Activated naive CD4-positive, alpha-beta T cell treated with anti-CD3 and anti-CD28 coated beads for 36 hours (primary cell): ENCODE measurements at regions of chr6 and their contacts with region 1.

Region 1: DNA sequence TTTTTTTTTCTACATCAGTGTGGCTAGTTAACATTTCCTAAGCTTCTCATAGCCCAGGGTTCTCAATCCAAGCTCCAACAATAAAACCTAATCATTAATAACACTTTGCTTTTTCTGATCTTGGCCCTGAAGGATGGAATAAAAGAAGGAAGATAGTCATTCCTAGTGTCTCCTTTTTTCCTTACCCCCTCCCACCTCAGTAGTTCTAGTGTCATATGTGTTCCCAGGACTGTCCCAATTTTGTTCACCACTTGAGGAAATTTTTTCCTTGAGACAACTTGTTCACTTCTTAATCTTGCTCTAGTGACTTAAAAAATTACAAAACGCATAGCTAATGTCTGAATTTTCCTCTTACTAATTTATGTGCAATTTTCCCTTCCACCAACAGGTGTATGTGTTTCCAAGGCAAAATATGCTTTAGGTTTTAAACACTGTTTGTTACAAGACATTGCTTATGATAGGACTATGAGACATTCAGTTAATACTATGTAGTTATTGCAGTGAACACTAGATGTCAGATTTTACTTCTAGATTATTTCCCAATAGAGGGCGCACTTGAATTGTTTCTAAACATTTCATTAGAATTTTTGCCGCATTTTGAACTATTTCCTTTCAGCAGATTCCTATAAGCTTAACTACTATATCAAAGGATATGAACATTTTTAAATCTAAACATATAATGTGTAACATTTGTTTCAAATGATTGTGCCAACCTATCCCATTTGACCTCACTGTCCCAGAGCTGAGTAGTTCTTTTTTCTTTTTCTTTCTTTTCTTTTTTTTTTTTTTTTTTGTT is 18.5 kb upstream of the C6orf141 start:
- DNase-seq: no peak
- H3K4me3 Mint-ChIP-seq: no peak overlapping the region
- H3K27ac Mint-ChIP-seq: no peak overlapping the region
- H3K4me1 Mint-ChIP-seq: no peaks in the 10 kb centered on the region
- H3K27me3 Mint-ChIP-seq: peaks cover 5% of the 10 kb centered on the region

Region 2: DNA sequence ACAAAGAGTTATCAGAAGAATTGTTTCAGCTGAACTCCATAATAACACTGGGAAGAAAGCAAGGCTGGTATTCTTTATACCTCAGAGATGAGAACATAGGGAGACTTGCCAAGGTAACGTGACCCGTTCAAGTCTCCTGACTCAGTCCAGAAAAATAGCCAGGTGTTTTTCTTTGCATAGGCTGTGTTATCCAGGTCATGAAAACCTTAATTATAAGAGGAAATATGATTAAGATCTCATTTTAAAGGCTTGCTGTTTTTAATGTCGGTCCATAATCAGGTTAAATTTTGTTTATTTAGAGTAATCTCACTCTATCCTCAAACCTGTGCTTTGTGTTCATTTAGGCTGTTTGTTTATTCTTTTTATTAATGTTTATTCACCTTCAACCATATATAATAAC is 10.0 kb after region 1 on chr6:
- CTCF ChIA-PET with region 1: interaction called, 27 read pairs
- intact Hi-C with region 1: no loop called
- DNase-seq: no peak
- H3K4me3 Mint-ChIP-seq: no peak overlapping the region
- H3K27ac Mint-ChIP-seq: no peak overlapping the region
- H3K4me1 Mint-ChIP-seq: peaks cover 4% of the 10 kb centered on the region
- H3K27me3 Mint-ChIP-seq: peaks cover 6% of the 10 kb centered on the region

Region 3: GRCh38 chr6:49570474-49571079 is 38.6 kb after region 1 on chr6:
- CTCF ChIA-PET with region 1: interaction called, 5 read pairs
- intact Hi-C with region 1: loop called (anchors 2 kb)
- DNase-seq: no peak
- H3K4me3 Mint-ChIP-seq: no peak overlapping the region
- H3K27ac Mint-ChIP-seq: no peak overlapping the region
- H3K4me1 Mint-ChIP-seq: no peaks in the 10 kb centered on the region
- H3K27me3 Mint-ChIP-seq: peaks cover 10% of the 10 kb centered on the region

Region 4: GRCh38 chr6:49618257-49618656 is 86.3 kb after region 1 on chr6:
- CTCF ChIA-PET with region 1: interaction called, 12 read pairs
- intact Hi-C with region 1: no loop called
- DNase-seq: no peak
- H3K4me3 Mint-ChIP-seq: no peak overlapping the region
- H3K27ac Mint-ChIP-seq: no peak overlapping the region
- H3K4me1 Mint-ChIP-seq: no peaks in the 10 kb centered on the region
- H3K27me3 Mint-ChIP-seq: no peaks in the 10 kb centered on the region

Region 5: DNA sequence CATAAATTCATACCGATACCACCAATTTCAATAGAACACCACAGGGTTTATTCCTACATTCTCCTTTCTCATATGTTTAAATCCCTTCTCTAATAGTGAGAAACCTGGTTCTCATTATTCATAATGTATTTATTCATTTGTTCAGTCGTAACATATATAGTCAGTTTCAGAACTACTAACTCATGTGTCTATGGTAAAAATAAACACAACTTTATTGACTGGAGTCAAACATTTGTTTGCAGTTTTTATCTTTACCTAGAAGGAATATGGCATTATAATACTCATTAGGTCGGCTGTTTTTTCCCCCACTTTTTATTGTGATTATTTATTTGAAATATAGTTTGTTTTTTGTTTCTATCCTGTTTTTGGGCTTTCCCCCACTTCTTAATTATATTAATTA is 153.5 kb after region 1 on chr6:
- CTCF ChIA-PET with region 1: no interaction called
- intact Hi-C with region 1: no loop called
- DNase-seq: no peak
- H3K4me3 Mint-ChIP-seq: no peak overlapping the region
- H3K27ac Mint-ChIP-seq: no peak overlapping the region
- H3K4me1 Mint-ChIP-seq: no peaks in the 10 kb centered on the region
- H3K27me3 Mint-ChIP-seq: no peaks in the 10 kb centered on the region

Region 6: GRCh38 chr6:50602292-50602691 is 1070.3 kb after region 1 on chr6:
- CTCF ChIA-PET with region 1: no interaction called
- intact Hi-C with region 1: loop called (anchors 5 kb)
- DNase-seq: no peak
- H3K4me3 Mint-ChIP-seq: no peak overlapping the region
- H3K27ac Mint-ChIP-seq: no peak overlapping the region
- H3K4me1 Mint-ChIP-seq: no peaks in the 10 kb centered on the region
- H3K27me3 Mint-ChIP-seq: no peaks in the 10 kb centered on the region